WTC11 (cell line): ENCODE measurements at regions of chr19 and their contacts with region 1.

Region 1: DNA sequence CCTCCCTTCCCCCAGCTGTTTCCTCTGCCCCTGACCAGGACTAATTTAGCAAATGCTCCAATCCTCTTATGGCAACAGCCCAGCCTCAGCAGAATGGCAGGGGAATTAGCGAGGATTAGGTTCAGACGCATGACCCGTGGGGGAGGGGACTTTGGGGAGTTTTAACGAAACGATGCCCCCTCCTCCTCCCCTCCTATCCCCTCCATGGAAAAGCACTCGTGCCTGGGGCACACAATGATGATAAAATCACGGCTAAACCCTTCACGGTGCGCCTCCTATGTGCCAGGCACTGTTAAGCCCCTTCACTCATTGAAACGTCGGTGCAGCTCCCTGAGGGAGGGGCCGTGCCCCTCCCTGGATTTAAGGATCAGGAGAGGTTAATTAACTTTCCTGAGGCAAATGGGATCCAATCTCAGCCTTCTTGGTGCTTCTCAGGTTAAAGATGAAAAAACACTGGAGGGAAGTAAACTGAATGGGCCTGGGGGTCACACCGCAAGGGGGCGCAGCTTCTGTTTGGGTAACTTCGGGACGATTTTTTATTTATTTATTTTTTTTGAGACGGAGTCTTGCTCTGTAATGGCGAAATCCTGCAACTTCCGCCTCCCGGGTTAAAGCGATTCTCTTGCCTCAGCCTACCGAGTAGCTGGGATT is 10.1 kb upstream of the TPRX2 start:
- DNase-seq: peak; percentile 85
- ATAC-seq: peak; percentile 19
- H3K4me3 Mint-ChIP-seq: peak overlapping the region; percentile 69
- H3K27ac Mint-ChIP-seq: peak overlapping the region; percentile 98
- H3K4me1 Mint-ChIP-seq: peaks cover 35% of the 10 kb centered on the region
- H3K27me3 Mint-ChIP-seq: no peaks in the 10 kb centered on the region
- CTCF ChIP-seq: peak; percentile 82

Region 2: GRCh38 chr19:47512183-47512947 is 336.6 kb before region 1 on chr19:
- CTCF ChIA-PET with region 1: no interaction called
- POLR2A ChIA-PET with region 1: no interaction called
- DNase-seq: no peak
- ATAC-seq: no peak
- H3K4me3 Mint-ChIP-seq: peak overlapping the region; percentile 97
- H3K27ac Mint-ChIP-seq: peak overlapping the region; percentile 92
- H3K4me1 Mint-ChIP-seq: peaks cover 30% of the 10 kb centered on the region
- H3K27me3 Mint-ChIP-seq: no peaks in the 10 kb centered on the region
- CTCF ChIP-seq: no peak

Region 3: GRCh38 chr19:47765523-47766358 is 83.2 kb before region 1 on chr19:
- CTCF ChIA-PET with region 1: interaction called, 22 read pairs
- POLR2A ChIA-PET with region 1: no interaction called
- DNase-seq: peak; percentile 88
- ATAC-seq: peak; percentile 79
- H3K4me3 Mint-ChIP-seq: no peak overlapping the region
- H3K27ac Mint-ChIP-seq: peak overlapping the region; percentile 85
- H3K4me1 Mint-ChIP-seq: peaks cover 22% of the 10 kb centered on the region
- H3K27me3 Mint-ChIP-seq: no peaks in the 10 kb centered on the region
- CTCF ChIP-seq: peak; percentile 80

Region 4: GRCh38 chr19:47797996-47798903 is 50.7 kb before region 1 on chr19:
- CTCF ChIA-PET with region 1: interaction called, 13 read pairs
- POLR2A ChIA-PET with region 1: interaction called, 3 read pairs
- DNase-seq: no peak
- ATAC-seq: no peak
- H3K4me3 Mint-ChIP-seq: no peak overlapping the region
- H3K27ac Mint-ChIP-seq: no peak overlapping the region
- H3K4me1 Mint-ChIP-seq: no peaks in the 10 kb centered on the region
- H3K27me3 Mint-ChIP-seq: no peaks in the 10 kb centered on the region
- CTCF ChIP-seq: no peak

Region 5: GRCh38 chr19:47819858-47820257 is 29.1 kb before region 1 on chr19:
- CTCF ChIA-PET with region 1: interaction called, 23 read pairs
- POLR2A ChIA-PET with region 1: interaction called, 5 read pairs
- DNase-seq: no peak
- ATAC-seq: peak; percentile 85
- H3K4me3 Mint-ChIP-seq: peak overlapping the region; percentile 41
- H3K27ac Mint-ChIP-seq: peak overlapping the region; percentile 73; the same call in 1 of the 2 replicates
- H3K4me1 Mint-ChIP-seq: peaks cover 34% of the 10 kb centered on the region
- H3K27me3 Mint-ChIP-seq: no peaks in the 10 kb centered on the region
- CTCF ChIP-seq: no peak

Region 6: DNA sequence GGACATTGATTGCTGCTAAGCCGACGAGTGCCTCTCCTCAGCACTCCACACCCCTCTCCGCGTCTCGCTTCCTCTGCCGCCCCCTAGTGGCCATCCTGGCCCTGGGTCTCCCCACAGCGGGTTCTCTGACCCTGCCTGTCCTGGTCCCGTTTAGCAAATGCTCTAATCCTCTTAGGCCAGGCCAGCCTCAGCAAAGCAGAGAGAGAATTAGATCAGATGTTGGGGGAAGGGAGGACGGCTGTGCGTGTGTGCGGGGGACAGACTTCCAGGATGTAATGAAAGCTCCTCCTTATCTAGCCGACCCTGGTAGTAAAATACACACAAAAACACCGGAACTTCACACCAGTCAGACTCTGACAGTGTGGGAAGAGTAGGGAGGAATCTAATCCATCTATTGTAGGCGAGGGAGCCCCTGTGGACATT is 14.6 kb after region 1 on chr19:
- CTCF ChIA-PET with region 1: interaction called, 54 read pairs
- POLR2A ChIA-PET with region 1: interaction called, 4 read pairs
- DNase-seq: peak; percentile 98
- ATAC-seq: peak; percentile 93
- H3K4me3 Mint-ChIP-seq: peak overlapping the region; percentile 45
- H3K27ac Mint-ChIP-seq: peak overlapping the region; percentile 80; the same call in 1 of the 2 replicates
- H3K4me1 Mint-ChIP-seq: peaks cover 21% of the 10 kb centered on the region
- H3K27me3 Mint-ChIP-seq: no peaks in the 10 kb centered on the region
- CTCF ChIP-seq: peak; percentile 97

Region 7: DNA sequence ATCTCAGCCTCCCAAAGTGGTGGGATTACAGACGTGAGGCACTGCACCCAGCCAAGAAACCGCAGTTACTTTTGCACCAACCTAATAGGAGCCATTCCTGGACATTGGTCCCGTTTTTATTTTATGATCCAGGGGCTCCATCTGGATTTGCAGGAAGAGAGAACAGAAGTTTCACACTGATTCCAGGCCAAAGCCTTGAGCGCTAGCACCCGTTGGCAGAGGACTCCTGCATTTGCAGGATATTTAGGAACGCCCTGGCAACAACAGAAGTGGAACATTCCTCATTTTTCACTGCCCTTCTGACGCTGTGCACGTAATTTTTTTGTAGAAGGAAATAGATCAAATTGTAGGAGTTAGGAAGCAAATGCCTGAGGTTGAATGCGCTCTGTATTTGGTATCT is 48.9 kb after region 1 on chr19:
- CTCF ChIA-PET with region 1: no interaction called
- POLR2A ChIA-PET with region 1: no interaction called
- DNase-seq: no peak
- ATAC-seq: no peak
- H3K4me3 Mint-ChIP-seq: no peak overlapping the region
- H3K27ac Mint-ChIP-seq: peak overlapping the region; percentile 26
- H3K4me1 Mint-ChIP-seq: peaks cover 3% of the 10 kb centered on the region; the same call in 1 of the 2 replicates
- H3K27me3 Mint-ChIP-seq: no peaks in the 10 kb centered on the region
- CTCF ChIP-seq: no peak